ENCODE measurements at regions of chr2 and their contacts with region 1.

Region 1: GRCh38 chr2:25063876-25064660 is 22.2 kb downstream of the EFR3B start:
- DNase-seq: peak in 41 of 42 donors; percentile 28 to 82 (median 61)

Region 2: DNA sequence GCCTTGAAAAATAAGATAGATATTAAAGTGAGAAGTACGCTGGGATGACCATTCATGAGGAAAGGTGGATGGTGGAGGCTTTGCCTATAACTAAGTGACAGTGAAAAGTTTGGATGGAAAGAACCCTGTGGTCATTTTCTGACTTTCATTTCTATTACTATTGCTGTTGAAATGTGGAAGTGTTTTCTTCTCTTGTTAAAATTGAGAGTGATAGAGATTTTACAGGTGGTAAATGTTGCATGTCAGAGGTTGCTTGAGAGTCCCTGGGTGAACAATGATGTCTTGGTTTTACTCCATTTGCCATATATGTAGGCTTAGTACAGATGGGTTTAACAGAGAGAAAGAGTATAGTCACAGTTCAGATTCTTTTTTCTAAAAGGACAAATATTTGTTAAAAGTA is 554.6 kb before region 1 on chr2:
- intact Hi-C with region 1: no loop called
- DNase-seq: no peak

Region 3: DNA sequence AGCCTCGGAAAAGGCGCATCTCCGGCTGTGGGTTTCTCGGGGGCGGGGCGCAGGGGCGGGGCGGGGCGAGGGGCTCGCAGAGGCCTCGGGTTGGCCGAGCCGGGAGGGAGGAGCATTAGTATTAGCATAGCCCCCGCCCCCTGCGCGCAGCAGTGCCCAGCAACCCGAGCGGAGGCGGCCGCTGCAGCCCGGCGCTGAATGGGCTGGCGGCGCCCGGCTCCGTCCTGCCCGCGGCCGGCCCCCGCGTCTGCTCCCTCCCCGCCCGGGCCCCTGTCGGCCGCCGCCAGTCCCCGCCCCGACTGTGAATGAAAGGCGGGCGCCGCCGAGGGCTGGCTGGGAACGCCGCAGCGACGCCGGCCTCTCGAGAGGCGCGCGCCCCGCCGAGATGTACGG is 22.1 kb before region 1 on chr2 and contains the start of gene EFR3B:
- intact Hi-C with region 1: loop called (anchors 1 kb)
- DNase-seq: peak; percentile 91 to 99 (median 97)